A673 (cell line): ENCODE measurements at regions of chr6 and their contacts with region 1.

Region 1: GRCh38 chr6:35449287-35449881 is 2.8 kb upstream of the FANCE start:
- DNase-seq: peak; percentile 82
- H3K4me3 ChIP-seq: no peak overlapping the region
- H3K27ac ChIP-seq: no peak overlapping the region
- H3K4me1 ChIP-seq: peaks cover 19% of the 10 kb centered on the region
- H3K27me3 ChIP-seq: no peaks in the 10 kb centered on the region
- CTCF ChIP-seq: peak; percentile 68

Region 2: GRCh38 chr6:35294308-35294945 is 155.0 kb before region 1 on chr6:
- CTCF ChIA-PET with region 1: interaction called, 9 read pairs
- POLR2A ChIA-PET with region 1: no interaction called
- intact Hi-C with region 1: loop called (anchors 1 kb)
- DNase-seq: peak; percentile 48
- H3K4me3 ChIP-seq: no peak overlapping the region
- H3K27ac ChIP-seq: no peak overlapping the region
- H3K4me1 ChIP-seq: no peaks in the 10 kb centered on the region
- H3K27me3 ChIP-seq: no peaks in the 10 kb centered on the region
- CTCF ChIP-seq: peak; percentile 78

Region 3: GRCh38 chr6:35415065-35415991 is 34.1 kb before region 1 on chr6:
- CTCF ChIA-PET with region 1: interaction called, 11 read pairs
- POLR2A ChIA-PET with region 1: no interaction called
- intact Hi-C with region 1: no loop called
- DNase-seq: peak; percentile 74
- H3K4me3 ChIP-seq: no peak overlapping the region
- H3K27ac ChIP-seq: no peak overlapping the region
- H3K4me1 ChIP-seq: peaks cover 4% of the 10 kb centered on the region
- H3K27me3 ChIP-seq: no peaks in the 10 kb centered on the region
- CTCF ChIP-seq: peak; percentile 65

Region 4: GRCh38 chr6:35786810-35787209 is 337.4 kb after region 1 on chr6:
- CTCF ChIA-PET with region 1: no interaction called
- POLR2A ChIA-PET with region 1: no interaction called
- intact Hi-C with region 1: no loop called
- DNase-seq: peak; percentile 35
- H3K4me3 ChIP-seq: no peak overlapping the region
- H3K27ac ChIP-seq: no peak overlapping the region
- H3K4me1 ChIP-seq: no peaks in the 10 kb centered on the region
- H3K27me3 ChIP-seq: peaks cover 35% of the 10 kb centered on the region
- CTCF ChIP-seq: no peak

Region 5: GRCh38 chr6:37303932-37304363 is 1854.6 kb after region 1 on chr6:
- CTCF ChIA-PET with region 1: no interaction called
- POLR2A ChIA-PET with region 1: no interaction called
- intact Hi-C with region 1: no loop called
- DNase-seq: peak; percentile 58
- H3K4me3 ChIP-seq: no peak overlapping the region
- H3K27ac ChIP-seq: no peak overlapping the region
- H3K4me1 ChIP-seq: no peaks in the 10 kb centered on the region
- H3K27me3 ChIP-seq: no peaks in the 10 kb centered on the region
- CTCF ChIP-seq: peak; percentile 69